Common myeloid progenitor, CD34-positive (primary cell): ENCODE measurements at regions of chr5 and their contacts with region 1.

Region 1: GRCh38 chr5:43304525-43304924 is 8.7 kb downstream of the HMGCS1 start:
- DNase-seq: peak in 1 of 3 donors; percentile 18
- H3K4me3 ChIP-seq: peak overlapping the region in 1 of 7 experiments; percentile 8
- H3K27ac ChIP-seq: no peak overlapping the region
- H3K4me1 ChIP-seq: peaks cover 0 to 56% (median 8%) of the 10 kb centered on the region in 4 experiments
- H3K27me3 ChIP-seq: no peaks in the 10 kb centered on the region

Region 2: GRCh38 chr5:43294226-43294625 is 10.3 kb before region 1 on chr5:
- CTCF ChIA-PET with region 1: interaction called, 10 read pairs
- POLR2A ChIA-PET with region 1: no interaction called
- DNase-seq: no peak
- H3K4me3 ChIP-seq: no peak overlapping the region
- H3K27ac ChIP-seq: no peak overlapping the region
- H3K4me1 ChIP-seq: no peaks in the 10 kb centered on the region
- H3K27me3 ChIP-seq: no peaks in the 10 kb centered on the region